ENCODE measurements at regions of chr5 and their contacts with region 1.

Region 1: GRCh38 chr5:132073231-132074013 is at the start of gene CSF2:
- DNase-seq: no peak
- H3K4me3 ChIP-seq: no peak within 1 kb of the TSS
- H3K27ac ChIP-seq: no peak within 1 kb of the TSS
- H3K4me1 ChIP-seq: no peaks in the 10 kb centered on the region
- H3K27me3 ChIP-seq: no peaks in the 10 kb centered on the region
- CTCF ChIP-seq: no peak
- POLR2A ChIP-seq: no peak
- total RNA-seq, gene CSF2: not detected

Region 2: GRCh38 chr5:132019857-132020555 is 53.4 kb before region 1 on chr5:
- intact Hi-C with region 1: no loop called
- DNase-seq: no peak
- H3K4me3 ChIP-seq: no peak overlapping the region
- H3K27ac ChIP-seq: no peak overlapping the region
- H3K4me1 ChIP-seq: no peaks in the 10 kb centered on the region
- H3K27me3 ChIP-seq: peaks cover 0 to 8% of the 10 kb centered on the region in 2 donors
- CTCF ChIP-seq: no peak
- POLR2A ChIP-seq: no peak

Region 3: DNA sequence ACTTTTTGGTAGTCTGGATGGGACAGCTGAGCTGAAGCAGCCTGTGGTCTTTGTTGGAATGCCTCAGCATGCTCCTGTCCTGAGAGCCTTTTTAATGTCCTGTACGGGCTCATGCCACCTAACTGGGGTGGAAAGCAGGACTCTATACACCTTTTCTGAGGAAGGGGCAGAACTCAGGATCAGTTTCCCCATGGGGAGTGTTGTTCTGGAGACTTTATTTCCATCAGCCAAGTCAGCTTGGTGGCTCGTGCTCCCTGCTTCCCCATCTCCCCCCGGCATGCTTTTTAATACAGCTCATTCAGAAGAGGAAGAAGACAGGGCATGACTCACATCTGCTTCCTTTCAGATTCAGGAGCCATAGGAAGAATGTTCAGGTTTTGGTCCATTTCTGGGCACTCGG is 708.7 kb after region 1 on chr5:
- intact Hi-C with region 1: loop called (anchors 5 kb)
- DNase-seq: no peak
- H3K4me3 ChIP-seq: no peak overlapping the region
- H3K27ac ChIP-seq: no peak overlapping the region
- H3K4me1 ChIP-seq: peaks cover 0 to 3% of the 10 kb centered on the region in 2 donors
- H3K27me3 ChIP-seq: no peaks in the 10 kb centered on the region
- CTCF ChIP-seq: no peak
- POLR2A ChIP-seq: no peak

Measured in breast epithelium (tissue), 4 donors.